Activated naive CD4-positive, alpha-beta T cell treated with anti-CD3 and anti-CD28 coated beads for 36 hours (primary cell): ENCODE measurements at regions of chr1 and their contacts with region 1.

Region 1: GRCh38 chr1:11337580-11338073 is 64.6 kb downstream of the UBIAD1 start:
- DNase-seq: peak; percentile 81
- H3K4me3 Mint-ChIP-seq: no peak overlapping the region
- H3K27ac Mint-ChIP-seq: no peak overlapping the region
- H3K4me1 Mint-ChIP-seq: peaks cover 14% of the 10 kb centered on the region
- H3K27me3 Mint-ChIP-seq: peaks cover 6% of the 10 kb centered on the region

Region 2: GRCh38 chr1:9629445-9630201 is 1708.0 kb before region 1 on chr1:
- CTCF ChIA-PET with region 1: no interaction called
- intact Hi-C with region 1: no loop called
- DNase-seq: peak; percentile 87
- H3K4me3 Mint-ChIP-seq: peak overlapping the region; percentile 85
- H3K27ac Mint-ChIP-seq: peak overlapping the region; percentile 93
- H3K4me1 Mint-ChIP-seq: peaks cover 67% of the 10 kb centered on the region
- H3K27me3 Mint-ChIP-seq: no peaks in the 10 kb centered on the region

Region 3: DNA sequence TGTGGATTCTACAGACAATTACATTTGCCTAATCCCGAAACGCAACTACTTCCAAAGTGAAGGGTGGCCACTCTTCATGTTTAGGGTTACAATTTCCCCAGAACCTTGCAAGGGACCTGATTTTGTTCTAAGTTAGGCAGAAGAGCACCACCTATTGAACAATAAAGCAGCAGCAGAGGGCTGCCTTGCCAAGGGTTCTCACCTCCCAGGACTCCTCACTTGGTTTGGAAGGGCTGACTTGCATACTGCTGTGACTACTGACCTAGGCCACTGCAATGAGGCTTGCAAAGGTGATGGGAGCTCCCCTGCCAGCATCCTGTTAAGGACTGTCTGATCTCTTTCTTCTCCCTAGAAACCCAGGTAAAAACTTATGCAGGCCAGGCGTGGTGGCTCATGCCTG is 89.5 kb before region 1 on chr1:
- CTCF ChIA-PET with region 1: no interaction called
- intact Hi-C with region 1: loop called (anchors 5 kb)
- DNase-seq: no peak
- H3K4me3 Mint-ChIP-seq: no peak overlapping the region
- H3K27ac Mint-ChIP-seq: no peak overlapping the region
- H3K4me1 Mint-ChIP-seq: no peaks in the 10 kb centered on the region
- H3K27me3 Mint-ChIP-seq: no peaks in the 10 kb centered on the region

Region 4: GRCh38 chr1:11434506-11434905 is 96.9 kb after region 1 on chr1:
- CTCF ChIA-PET with region 1: no interaction called
- intact Hi-C with region 1: loop called (anchors 1 kb)
- DNase-seq: no peak
- H3K4me3 Mint-ChIP-seq: no peak overlapping the region
- H3K27ac Mint-ChIP-seq: no peak overlapping the region
- H3K4me1 Mint-ChIP-seq: peaks cover 14% of the 10 kb centered on the region
- H3K27me3 Mint-ChIP-seq: no peaks in the 10 kb centered on the region

Region 5: DNA sequence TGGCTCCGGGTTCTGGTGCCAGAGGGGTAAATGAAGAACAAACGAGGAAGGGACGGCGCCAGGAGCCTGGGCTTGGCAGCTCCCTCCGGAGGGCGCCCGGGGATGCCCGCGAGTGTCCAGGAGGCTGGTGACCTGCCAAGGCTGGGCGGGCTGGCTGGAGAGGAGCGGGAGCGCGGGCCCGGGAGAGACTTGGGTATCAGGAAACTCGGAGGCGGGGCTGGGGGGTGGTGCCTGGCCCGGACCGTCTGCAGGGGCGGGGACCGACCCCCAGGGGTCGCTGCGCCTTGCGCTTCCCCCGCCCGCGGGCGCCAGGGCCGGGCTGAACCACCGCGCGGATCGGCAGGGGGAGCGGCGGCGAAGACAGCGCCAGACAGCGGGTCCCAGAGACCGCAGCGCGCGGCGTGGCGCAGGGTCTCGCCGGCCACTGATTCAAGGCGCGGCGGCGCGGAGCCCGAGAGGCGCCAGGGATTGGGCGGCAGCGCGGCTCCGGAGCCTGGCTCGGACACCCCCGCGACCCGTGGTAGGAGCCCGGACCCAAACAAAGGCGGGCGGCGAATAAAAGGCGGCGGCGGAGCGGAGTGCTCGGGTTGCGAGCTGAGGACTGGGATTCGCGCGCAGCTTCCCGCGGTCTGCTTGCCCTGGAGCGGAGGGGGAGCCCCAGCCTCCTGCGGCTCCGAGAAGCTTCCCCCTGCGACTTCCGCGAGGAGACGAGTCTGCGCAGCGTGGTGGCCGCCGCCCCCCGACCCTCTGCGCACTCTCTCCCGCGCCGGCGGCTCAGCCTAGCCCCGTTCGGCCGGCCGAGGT is 141.1 kb after region 1 on chr1 and contains the start of gene DISP3:
- CTCF ChIA-PET with region 1: no interaction called
- intact Hi-C with region 1: loop called (anchors 5 kb)
- DNase-seq: peak; percentile 85
- H3K4me3 Mint-ChIP-seq: peak within 1 kb of the TSS; percentile 54
- H3K27ac Mint-ChIP-seq: no peak within 1 kb of the TSS
- H3K4me1 Mint-ChIP-seq: peaks cover 11% of the 10 kb centered on the region
- H3K27me3 Mint-ChIP-seq: peaks cover 25% of the 10 kb centered on the region
- total RNA-seq, gene DISP3: 0.07 to 0.17 TPM